ENCODE measurements at regions of chr15 and their contacts with region 1.

Region 1: GRCh38 chr15:58269455-58270414 is 131.6 kb downstream of the AQP9 start:
- DNase-seq: peak; percentile 59
- ATAC-seq: peak; percentile 82
- H3K4me3 Mint-ChIP-seq: no peak overlapping the region
- H3K27ac Mint-ChIP-seq: peak overlapping the region; percentile 75
- H3K4me1 Mint-ChIP-seq: peaks cover 10% of the 10 kb centered on the region
- H3K27me3 Mint-ChIP-seq: no peaks in the 10 kb centered on the region

Region 2: DNA sequence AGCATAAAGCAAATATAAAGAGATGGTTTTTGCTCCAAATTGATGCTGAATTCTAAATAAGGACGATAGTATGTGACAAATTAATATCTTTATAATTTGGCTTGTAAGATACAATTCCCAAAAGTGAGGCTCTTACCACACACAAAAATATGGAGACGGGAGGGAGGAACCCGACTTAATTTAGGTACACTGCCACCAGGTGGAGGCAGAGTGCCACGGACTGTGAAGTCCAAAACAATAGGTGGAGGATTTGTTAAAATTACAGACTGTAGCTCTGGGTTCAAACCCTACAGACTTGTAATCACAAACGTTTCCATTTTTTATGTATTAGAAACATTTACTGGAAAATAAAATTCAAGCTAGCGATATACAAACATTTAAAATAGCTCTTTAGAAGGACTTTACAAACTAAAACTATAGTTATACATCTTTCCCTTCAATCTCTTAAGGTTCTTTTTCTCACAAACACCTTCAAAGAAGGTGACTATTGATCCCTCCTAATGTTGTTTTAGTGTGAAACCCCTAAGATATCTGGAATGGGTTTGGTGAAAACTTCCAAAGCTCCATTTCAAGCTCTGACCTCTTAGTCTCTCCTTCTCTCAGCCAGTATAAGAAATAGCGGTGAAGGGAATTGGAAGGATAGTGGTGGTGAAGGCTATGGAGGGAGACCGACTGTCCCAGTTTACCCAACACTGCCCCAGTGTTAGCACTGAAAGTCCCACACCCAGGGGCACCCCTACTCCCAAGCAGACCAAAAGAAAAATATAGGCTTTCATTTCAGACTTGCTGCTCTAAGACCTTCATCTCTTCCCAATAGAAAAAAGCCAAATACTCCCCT is 41.8 kb before region 1 on chr15:
- CTCF ChIA-PET with region 1: interaction called, 10 read pairs
- DNase-seq: peak; percentile 76
- ATAC-seq: peak; percentile 71
- H3K4me3 Mint-ChIP-seq: no peak overlapping the region
- H3K27ac Mint-ChIP-seq: no peak overlapping the region
- H3K4me1 Mint-ChIP-seq: peaks cover 10% of the 10 kb centered on the region
- H3K27me3 Mint-ChIP-seq: peaks cover 18% of the 10 kb centered on the region

Region 3: GRCh38 chr15:58761010-58761388 is 491.3 kb after region 1 on chr15:
- CTCF ChIA-PET with region 1: interaction called, 12 read pairs
- DNase-seq: peak; percentile 50
- ATAC-seq: no peak
- H3K4me3 Mint-ChIP-seq: no peak overlapping the region
- H3K27ac Mint-ChIP-seq: no peak overlapping the region
- H3K4me1 Mint-ChIP-seq: peaks cover 21% of the 10 kb centered on the region
- H3K27me3 Mint-ChIP-seq: no peaks in the 10 kb centered on the region

Measured in activated CD8-positive, alpha-beta memory T cell treated with anti-CD3 and anti-CD28 coated beads, Interleukin-2, amount 10 ng/mL, durations not matched to agents 7 days and 5 days (primary cell).